ENCODE measurements at regions of chr12 and their contacts with region 1.

Region 1: GRCh38 chr12:90695415-90695814 is 259.6 kb downstream of the CCER1 start:
- DNase-seq: no peak
- ATAC-seq: no peak

Region 2: DNA sequence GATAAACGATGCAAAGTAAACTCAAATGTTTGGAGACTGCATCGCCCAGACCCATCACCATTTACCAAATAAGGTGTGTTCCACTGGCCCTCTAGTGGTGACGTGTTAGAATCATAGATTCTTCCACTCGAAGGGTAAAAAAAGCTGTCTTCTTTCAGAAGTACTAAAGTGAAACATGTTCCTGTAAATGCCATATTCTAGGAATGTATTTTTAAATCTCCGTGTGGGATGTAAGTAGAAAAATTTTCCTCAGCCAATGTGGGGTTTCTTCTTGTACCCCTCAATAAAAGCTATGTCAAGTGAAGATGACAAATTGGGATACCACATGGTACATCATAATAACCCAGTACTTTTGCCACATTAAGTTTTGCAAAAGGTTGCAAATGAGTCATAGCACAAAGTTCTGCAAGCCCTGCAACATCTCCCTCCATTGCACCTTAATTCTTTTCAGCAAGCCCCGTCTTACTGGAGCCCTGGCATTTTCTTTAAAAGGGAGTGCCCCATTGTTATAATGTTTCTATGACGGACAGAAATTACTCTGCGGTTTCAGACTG is 158.8 kb after region 1 on chr12:
- intact Hi-C with region 1: loop called (anchors 10 kb)
- DNase-seq: no peak
- ATAC-seq: no peak

Region 3: GRCh38 chr12:90909069-90909770 is 213.8 kb after region 1 on chr12:
- intact Hi-C with region 1: loop called (anchors 2 kb)
- DNase-seq: no peak
- ATAC-seq: no peak

Measured in Right ventricle myocardium inferior (tissue), 1 donor.